ENCODE measurements at regions of chr17 and their contacts with region 1.

Region 1: GRCh38 chr17:74368092-74369081 is 1.1 kb downstream of the GPR142 start:
- DNase-seq: peak; percentile 39 to 78 (median 59)
- ATAC-seq: peak; percentile 87
- H3K4me3 ChIP-seq: peak overlapping the region; percentile 43
- H3K4me3 Mint-ChIP-seq: peak overlapping the region in 9 of 10 donors; percentile 53 to 76 (median 68)
- H3K27ac ChIP-seq: no peak overlapping the region
- H3K27ac Mint-ChIP-seq: peak overlapping the region in 1 of 9 donors; percentile 36
- H3K4me1 ChIP-seq: peaks cover 12 to 13% of the 10 kb centered on the region in 2 donors
- H3K4me1 Mint-ChIP-seq: peaks cover 8 to 15% (median 12%) of the 10 kb centered on the region in 7 donors
- H3K27me3 ChIP-seq: no peaks in the 10 kb centered on the region
- H3K27me3 Mint-ChIP-seq: peaks cover 0 to 9% (median 0%) of the 10 kb centered on the region in 5 donors

Region 2: GRCh38 chr17:74528491-74529199 is 160.3 kb after region 1 on chr17:
- CTCF ChIA-PET with region 1: interaction called, 3 read pairs
- POLR2A ChIA-PET with region 1: no interaction called
- intact Hi-C with region 1: loop called (anchors 1 kb)
- DNase-seq: peak in 1 of 9 donors; percentile 12
- ATAC-seq: peak; percentile 64
- H3K4me3 ChIP-seq: no peak overlapping the region
- H3K4me3 Mint-ChIP-seq: no peak overlapping the region
- H3K27ac ChIP-seq: no peak overlapping the region
- H3K27ac Mint-ChIP-seq: no peak overlapping the region
- H3K4me1 ChIP-seq: no peaks in the 10 kb centered on the region
- H3K4me1 Mint-ChIP-seq: peaks cover 3 to 18% (median 6%) of the 10 kb centered on the region in 7 donors
- H3K27me3 ChIP-seq: no peaks in the 10 kb centered on the region
- H3K27me3 Mint-ChIP-seq: peaks cover 23 to 50% (median 32%) of the 10 kb centered on the region in 5 donors

Region 3: DNA sequence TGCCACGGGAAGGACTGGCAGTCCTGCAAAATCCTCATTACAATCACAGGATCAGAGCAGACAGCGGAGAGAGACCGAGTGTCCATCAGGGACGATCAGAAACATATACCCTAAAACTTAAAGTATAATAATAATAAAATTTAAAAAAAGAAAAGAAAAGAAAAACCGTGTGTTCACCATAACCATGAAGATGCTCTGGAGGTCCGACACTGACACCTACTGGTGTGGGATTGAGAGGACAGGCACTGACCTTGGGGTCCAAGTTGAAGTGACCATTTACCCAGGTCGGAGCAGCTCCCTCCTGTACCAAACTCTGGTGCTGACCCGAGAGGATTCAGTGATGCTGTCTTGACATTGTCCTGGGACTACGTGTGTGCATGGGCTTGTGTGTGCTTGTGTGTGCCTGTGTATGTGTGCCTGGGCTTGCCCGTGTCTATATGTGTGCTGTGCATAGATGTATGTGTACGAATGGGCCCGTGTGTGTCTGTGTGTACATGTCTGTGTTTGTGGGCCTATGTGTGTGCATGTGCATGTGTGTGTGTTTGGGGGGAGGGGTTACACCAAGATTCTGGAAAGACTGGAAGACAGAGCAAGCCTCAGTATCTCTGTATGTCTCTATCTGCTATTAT is 233.7 kb after region 1 on chr17:
- CTCF ChIA-PET with region 1: no interaction called
- POLR2A ChIA-PET with region 1: no interaction called
- intact Hi-C with region 1: loop called (anchors 1 to 5 kb)
- DNase-seq: peak in 4 of 9 donors; percentile 12 to 29 (median 24)
- ATAC-seq: peak; percentile 40
- H3K4me3 ChIP-seq: no peak overlapping the region
- H3K4me3 Mint-ChIP-seq: peak overlapping the region in 3 of 10 donors; percentile 7 to 31 (median 9)
- H3K27ac ChIP-seq: no peak overlapping the region
- H3K27ac Mint-ChIP-seq: peak overlapping the region in 2 of 9 donors; percentile 3 to 46
- H3K4me1 ChIP-seq: peaks cover 0 to 18% of the 10 kb centered on the region in 2 donors
- H3K4me1 Mint-ChIP-seq: peaks cover 17 to 63% (median 45%) of the 10 kb centered on the region in 7 donors
- H3K27me3 ChIP-seq: no peaks in the 10 kb centered on the region
- H3K27me3 Mint-ChIP-seq: peaks cover 4 to 46% (median 15%) of the 10 kb centered on the region in 5 donors